Dorsolateral prefrontal cortex (tissue), 120 donors: ENCODE measurements at regions of chr5 and their contacts with region 1.

Region 1: DNA sequence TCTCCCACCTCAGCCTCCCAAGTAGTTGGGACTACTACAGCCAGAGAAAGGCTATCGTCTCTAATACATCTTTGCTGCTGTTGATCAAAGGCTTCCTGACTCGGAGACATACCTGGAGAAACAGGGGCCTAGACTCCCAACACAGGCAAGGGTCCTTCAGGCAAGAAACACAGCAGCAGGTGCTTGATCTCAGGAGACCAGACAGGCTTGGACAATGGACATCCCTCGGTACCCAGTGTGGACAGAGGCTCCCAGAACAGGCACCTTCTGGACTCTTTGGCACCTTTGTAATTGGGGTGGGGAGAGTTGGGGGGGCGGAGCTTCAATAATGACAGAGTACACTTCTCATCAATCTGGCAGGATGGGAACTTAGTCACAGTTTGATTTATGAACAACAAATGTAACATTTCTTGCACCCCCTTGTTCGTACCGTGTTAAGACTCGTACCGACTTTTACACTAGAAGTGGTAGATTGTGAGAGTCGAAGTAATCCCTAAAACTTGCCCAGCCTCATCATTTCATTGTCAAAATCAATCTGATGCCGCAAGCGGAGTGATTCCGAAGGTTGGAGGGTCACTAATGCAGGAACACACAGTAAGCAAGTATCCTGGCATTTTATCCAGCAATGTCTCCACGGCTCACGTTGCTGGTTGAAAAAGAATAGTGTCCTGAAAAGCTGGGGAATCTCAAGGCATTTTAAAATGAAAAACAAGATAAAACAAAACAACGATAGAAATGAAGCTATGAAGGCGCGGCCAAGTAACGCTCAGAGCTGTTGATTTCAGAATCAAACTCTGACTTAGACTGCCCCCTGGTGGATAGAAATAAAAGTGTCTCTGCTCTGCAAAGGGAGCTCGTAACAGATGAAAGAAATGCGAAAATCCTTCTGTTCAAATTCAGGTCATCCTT is 46.4 kb upstream of the STK32A start:
- DNase-seq: peak in 5 of 10 donors; percentile 36 to 72 (median 48)
- H3K4me3 ChIP-seq: peak overlapping the region in 56 of 59 donors; percentile 9 to 67 (median 50)
- H3K27ac ChIP-seq: peak overlapping the region in 26 of 59 donors; percentile 4 to 79 (median 57)
- H3K27me3 ChIP-seq: no peaks in the 10 kb centered on the region
- CTCF ChIP-seq: peak; percentile 85 to 100 (median 95)

Region 2: DNA sequence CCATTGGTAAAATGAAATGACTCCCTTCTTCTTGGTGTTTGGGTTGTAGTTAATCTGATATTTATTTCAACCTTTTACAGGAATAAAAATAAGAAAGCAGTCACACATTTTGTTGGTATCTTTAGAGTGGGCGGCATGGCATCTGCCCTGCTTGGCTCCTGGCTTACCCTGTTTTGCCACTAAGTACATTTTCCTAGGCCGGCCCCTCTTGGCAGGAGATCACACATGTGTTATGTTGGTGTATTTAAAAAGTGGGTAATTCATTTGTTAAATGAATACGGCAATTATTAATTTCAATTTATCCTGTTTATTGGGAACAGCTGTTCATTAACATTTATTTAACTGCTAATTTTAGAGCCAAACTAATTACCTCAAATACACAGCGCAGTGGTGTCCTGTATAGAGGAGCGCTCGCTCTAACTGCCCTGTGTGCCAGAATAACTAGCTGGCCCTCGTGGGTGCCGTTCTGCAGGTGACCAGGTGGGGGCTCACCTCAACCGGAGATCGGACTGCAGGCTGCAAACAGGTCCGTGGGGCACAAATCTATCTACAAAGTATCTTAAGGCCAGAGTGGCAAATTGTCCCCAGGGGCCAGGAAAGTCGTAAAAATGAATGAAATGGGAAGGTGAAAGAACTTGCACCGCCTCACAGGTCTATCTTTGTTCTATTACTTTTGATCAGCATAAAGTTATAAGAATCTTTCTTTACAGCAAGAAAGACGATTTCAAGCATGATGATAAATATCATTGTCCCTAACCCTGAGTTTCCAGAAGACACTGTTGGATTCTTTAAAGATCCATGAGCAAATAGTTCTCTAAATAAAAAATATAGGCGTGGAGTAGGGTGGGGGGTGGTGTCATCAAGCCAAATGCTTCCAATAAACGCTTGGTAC is 646.2 kb before region 1 on chr5:
- intact Hi-C with region 1: loop called (anchors 5 kb)
- DNase-seq: peak; percentile 69 to 86 (median 83)
- H3K4me3 ChIP-seq: peak overlapping the region in 2 of 59 donors; percentile 2 to 21
- H3K27ac ChIP-seq: no peak overlapping the region
- H3K27me3 ChIP-seq: no peaks in the 10 kb centered on the region
- CTCF ChIP-seq: peak; percentile 62 to 92 (median 82)

Region 3: GRCh38 chr5:146965761-146966659 is 222.4 kb before region 1 on chr5:
- intact Hi-C with region 1: loop called (anchors 2 kb)
- DNase-seq: peak in 3 of 10 donors; percentile 28 to 64 (median 58)
- H3K4me3 ChIP-seq: peak overlapping the region in 3 of 59 donors; percentile 10 to 26 (median 20)
- H3K27ac ChIP-seq: peak overlapping the region in 29 of 59 donors; percentile 1 to 94 (median 47)
- H3K27me3 ChIP-seq: no peaks in the 10 kb centered on the region
- CTCF ChIP-seq: peak; percentile 85 to 100 (median 95)

Region 4: GRCh38 chr5:147081311-147081764 is 107.1 kb before region 1 on chr5:
- intact Hi-C with region 1: loop called in 1 of 2 experiments (anchors 5 kb)
- DNase-seq: peak; percentile 7 to 87 (median 74)
- H3K4me3 ChIP-seq: peak overlapping the region; percentile 10 to 76 (median 53)
- H3K27ac ChIP-seq: peak overlapping the region; percentile 22 to 99 (median 95)
- H3K27me3 ChIP-seq: no peaks in the 10 kb centered on the region
- CTCF ChIP-seq: peak in 1 of 56 donors; percentile 17

Region 5: GRCh38 chr5:147098233-147098790 is 90.1 kb before region 1 on chr5:
- intact Hi-C with region 1: loop called in 1 of 2 experiments (anchors 5 kb)
- DNase-seq: peak in 2 of 10 donors; percentile 19 to 36
- H3K4me3 ChIP-seq: peak overlapping the region in 38 of 59 donors; percentile 0 to 53 (median 20)
- H3K27ac ChIP-seq: peak overlapping the region in 57 of 59 donors; percentile 7 to 87 (median 70)
- H3K27me3 ChIP-seq: no peaks in the 10 kb centered on the region
- CTCF ChIP-seq: peak; percentile 35 to 73 (median 60)

Region 6: DNA sequence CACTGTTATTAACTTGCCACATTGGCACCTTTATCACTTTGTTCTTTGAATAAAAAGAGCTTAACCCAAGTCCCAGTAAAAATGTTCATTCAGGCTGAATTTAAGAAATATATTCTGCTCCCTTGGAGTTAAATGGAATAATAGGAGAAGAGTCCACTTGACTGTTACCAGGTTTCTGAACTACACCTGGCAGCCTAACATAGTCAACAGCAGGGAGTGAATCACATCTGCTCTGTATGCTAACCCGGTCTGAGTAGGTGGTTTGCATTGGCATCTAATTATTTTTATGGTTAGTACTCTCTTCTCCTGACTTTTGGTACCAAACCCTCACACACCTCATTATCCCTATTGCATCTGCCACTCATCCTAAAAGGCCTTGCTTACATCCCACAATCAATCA is 133.1 kb after region 1 on chr5:
- intact Hi-C with region 1: no loop called
- DNase-seq: no peak
- H3K4me3 ChIP-seq: no peak overlapping the region
- H3K27ac ChIP-seq: no peak overlapping the region
- H3K27me3 ChIP-seq: peaks cover 0 to 7% (median 0%) of the 10 kb centered on the region in 45 donors
- CTCF ChIP-seq: no peak